ENCODE measurements at regions of chr5 and their contacts with region 1.

Region 1: DNA sequence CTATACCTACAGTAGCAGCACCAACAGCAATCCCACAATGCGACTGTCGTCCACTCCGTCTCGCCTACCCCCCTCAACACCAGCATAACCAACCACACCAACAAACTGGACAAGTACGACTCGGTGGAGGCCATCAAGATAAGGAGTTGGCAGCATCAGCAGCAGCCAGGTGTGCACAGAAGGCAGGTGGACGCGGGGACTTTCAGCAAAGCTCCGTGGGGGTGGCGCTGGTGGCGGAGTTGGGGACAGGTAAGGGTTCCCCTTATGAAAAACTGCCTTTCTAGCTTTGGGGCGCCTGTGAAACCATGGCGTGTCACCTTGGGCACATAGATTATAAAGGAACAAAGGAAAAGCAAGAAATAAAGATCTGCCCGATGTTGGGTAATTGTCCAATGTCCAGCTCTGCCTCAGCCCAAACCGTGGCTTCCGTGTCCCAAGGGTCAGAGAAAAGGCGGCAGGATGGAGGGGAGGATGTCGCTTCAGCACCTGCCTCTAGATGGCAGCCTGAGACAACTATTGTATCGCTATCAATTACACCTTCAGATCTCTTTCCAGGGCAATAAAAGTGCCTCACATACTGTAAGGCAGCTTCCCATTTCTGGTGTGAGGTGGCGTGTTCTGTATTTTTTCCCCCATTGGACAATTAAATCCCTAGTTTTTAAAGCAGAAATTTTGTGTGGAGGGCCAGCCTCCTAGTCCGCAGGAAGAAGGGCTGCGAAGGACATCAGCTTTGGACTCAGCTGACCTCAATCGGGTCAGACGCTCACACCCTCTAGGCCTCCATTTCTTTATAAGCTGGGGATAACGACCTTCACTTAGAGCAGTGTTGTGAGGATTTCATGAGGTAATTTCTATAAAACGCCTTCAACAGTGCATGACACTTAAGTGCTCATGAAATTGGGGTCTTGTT is 58.8 kb downstream of the MTRR start:
- DNase-seq: peak; percentile 68
- ATAC-seq: peak; percentile 78
- H3K4me3 Mint-ChIP-seq: no peak overlapping the region
- H3K27ac Mint-ChIP-seq: no peak overlapping the region
- H3K4me1 Mint-ChIP-seq: peaks cover 5% of the 10 kb centered on the region
- H3K27me3 Mint-ChIP-seq: peaks cover 17% of the 10 kb centered on the region

Region 2: DNA sequence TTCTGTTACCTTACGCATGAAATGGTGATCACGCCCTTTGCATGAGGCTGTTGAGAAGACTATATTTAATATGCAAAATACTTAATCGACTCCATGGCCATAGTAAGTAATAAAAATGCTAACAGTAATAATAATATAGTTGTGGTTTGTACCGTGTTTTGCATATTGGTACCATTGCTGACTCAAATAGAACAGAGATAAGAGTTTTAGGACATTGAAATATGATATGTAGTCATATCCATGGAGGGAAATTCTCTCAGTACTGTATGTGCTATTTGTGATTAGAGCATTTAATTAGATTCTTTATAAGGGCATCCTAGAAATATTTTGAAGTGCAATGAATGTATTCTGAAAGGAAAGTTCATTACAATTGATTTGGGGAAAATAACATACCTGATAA is 118.7 kb before region 1 on chr5:
- CTCF ChIA-PET with region 1: no interaction called
- POLR2A ChIA-PET with region 1: no interaction called
- intact Hi-C with region 1: no loop called
- DNase-seq: no peak
- ATAC-seq: no peak
- H3K4me3 Mint-ChIP-seq: no peak overlapping the region
- H3K27ac Mint-ChIP-seq: no peak overlapping the region
- H3K4me1 Mint-ChIP-seq: no peaks in the 10 kb centered on the region
- H3K27me3 Mint-ChIP-seq: peaks cover 20% of the 10 kb centered on the region

Region 3: DNA sequence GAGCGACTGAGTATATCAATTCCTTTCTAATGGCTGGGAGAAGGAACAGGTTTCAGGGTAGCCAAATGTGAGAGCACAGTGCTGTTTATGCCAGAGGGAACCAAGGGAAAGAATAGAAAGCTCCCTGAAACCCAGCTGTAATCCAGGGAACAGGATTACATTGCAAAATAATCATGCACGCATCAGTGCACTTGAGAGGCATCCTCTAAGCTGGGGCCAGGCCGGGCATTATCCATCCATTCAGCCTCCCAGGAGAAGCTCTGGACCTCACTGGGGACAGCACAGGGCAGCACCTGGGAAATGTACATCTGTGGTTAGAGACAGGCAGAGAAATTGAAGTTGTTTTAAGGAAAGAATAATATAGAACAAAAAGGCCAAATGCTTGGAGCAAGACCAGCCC is 14.0 kb after region 1 on chr5:
- CTCF ChIA-PET with region 1: interaction called, 10 read pairs
- POLR2A ChIA-PET with region 1: no interaction called
- intact Hi-C with region 1: no loop called
- DNase-seq: no peak
- ATAC-seq: no peak
- H3K4me3 Mint-ChIP-seq: no peak overlapping the region
- H3K27ac Mint-ChIP-seq: no peak overlapping the region
- H3K4me1 Mint-ChIP-seq: no peaks in the 10 kb centered on the region
- H3K27me3 Mint-ChIP-seq: peaks cover 16% of the 10 kb centered on the region

Region 4: GRCh38 chr5:8740595-8740994 is 812.9 kb after region 1 on chr5:
- CTCF ChIA-PET with region 1: no interaction called
- POLR2A ChIA-PET with region 1: no interaction called
- intact Hi-C with region 1: no loop called
- DNase-seq: no peak
- ATAC-seq: no peak
- H3K4me3 Mint-ChIP-seq: no peak overlapping the region
- H3K27ac Mint-ChIP-seq: no peak overlapping the region
- H3K4me1 Mint-ChIP-seq: no peaks in the 10 kb centered on the region
- H3K27me3 Mint-ChIP-seq: no peaks in the 10 kb centered on the region

Region 5: DNA sequence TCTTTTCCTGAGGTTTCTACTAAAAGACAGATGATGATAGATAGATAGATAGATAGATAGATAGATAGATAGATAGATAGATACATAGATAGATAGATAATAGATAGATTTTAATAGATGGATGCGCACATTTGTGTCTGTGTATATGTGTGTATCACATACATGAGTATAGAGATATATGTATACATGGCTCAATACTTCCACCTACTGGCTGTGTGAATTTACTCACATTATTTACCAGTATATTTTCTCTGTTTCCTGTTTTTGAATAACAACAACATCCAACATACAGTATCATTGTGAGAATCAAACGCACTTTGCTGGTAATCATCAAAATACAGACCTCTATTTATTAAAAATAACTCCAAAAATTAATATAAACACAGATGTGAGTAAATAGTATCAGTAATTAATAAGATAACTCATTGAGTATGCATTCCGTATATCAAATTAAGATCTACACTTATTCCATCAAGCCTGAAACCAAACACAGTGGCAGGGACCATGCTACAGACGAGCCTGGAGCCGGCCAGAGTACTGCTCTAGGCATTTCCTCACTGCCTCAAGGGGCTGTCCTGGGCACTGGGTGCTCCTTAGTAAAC is 1280.2 kb after region 1 on chr5:
- CTCF ChIA-PET with region 1: interaction called, 6 read pairs
- POLR2A ChIA-PET with region 1: no interaction called
- intact Hi-C with region 1: loop called (anchors 2 to 5 kb)
- DNase-seq: no peak
- ATAC-seq: no peak
- H3K4me3 Mint-ChIP-seq: no peak overlapping the region
- H3K27ac Mint-ChIP-seq: no peak overlapping the region
- H3K4me1 Mint-ChIP-seq: no peaks in the 10 kb centered on the region
- H3K27me3 Mint-ChIP-seq: no peaks in the 10 kb centered on the region

Region 6: DNA sequence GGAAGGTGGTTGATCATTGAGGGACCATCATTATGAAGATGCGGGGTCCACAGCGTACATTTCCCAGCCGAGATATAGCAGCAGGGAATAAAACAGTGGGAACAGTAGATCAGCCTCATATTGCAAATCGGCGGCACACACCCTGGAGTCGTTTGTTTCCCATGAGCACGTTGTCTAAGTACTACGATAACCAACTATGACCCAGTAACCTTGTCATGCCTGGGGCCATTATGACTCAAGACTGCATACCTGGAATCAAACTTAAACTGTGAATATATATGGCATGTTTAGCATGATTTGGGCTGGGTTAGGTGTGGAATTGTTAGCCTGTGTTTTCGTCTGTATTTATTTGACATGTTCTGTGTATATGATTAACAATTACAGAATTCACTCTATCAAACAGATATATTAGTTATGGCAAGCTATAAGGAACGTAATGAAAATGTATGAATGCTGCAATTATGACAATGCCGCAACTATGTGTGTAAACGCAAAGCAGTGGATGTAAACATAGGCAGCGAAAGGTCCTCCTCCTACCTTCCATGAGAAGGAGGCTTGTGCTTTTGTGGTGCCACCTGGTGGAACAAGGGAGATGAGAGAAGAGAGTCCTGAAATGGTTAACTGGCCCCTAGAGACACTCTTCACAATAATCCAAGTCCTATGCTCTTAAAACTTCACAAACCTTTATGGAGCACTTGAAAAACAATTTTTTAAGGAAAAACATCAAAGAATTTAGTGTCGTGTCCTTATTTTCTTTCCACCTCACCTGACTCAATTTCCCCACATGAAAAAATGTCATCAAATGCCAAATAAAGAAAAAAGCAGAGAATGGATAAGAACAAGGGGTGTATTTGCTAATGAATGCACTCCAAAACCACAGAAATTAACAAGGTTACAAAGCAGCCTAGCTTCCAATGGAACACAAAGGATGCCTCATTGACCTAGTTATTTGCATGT is 1571.1 kb after region 1 on chr5:
- CTCF ChIA-PET with region 1: no interaction called
- POLR2A ChIA-PET with region 1: no interaction called
- intact Hi-C with region 1: loop called in 1 of 2 experiments (anchors 5 kb)
- DNase-seq: peak; percentile 12
- ATAC-seq: no peak
- H3K4me3 Mint-ChIP-seq: no peak overlapping the region
- H3K27ac Mint-ChIP-seq: no peak overlapping the region
- H3K4me1 Mint-ChIP-seq: no peaks in the 10 kb centered on the region
- H3K27me3 Mint-ChIP-seq: no peaks in the 10 kb centered on the region

Region 7: DNA sequence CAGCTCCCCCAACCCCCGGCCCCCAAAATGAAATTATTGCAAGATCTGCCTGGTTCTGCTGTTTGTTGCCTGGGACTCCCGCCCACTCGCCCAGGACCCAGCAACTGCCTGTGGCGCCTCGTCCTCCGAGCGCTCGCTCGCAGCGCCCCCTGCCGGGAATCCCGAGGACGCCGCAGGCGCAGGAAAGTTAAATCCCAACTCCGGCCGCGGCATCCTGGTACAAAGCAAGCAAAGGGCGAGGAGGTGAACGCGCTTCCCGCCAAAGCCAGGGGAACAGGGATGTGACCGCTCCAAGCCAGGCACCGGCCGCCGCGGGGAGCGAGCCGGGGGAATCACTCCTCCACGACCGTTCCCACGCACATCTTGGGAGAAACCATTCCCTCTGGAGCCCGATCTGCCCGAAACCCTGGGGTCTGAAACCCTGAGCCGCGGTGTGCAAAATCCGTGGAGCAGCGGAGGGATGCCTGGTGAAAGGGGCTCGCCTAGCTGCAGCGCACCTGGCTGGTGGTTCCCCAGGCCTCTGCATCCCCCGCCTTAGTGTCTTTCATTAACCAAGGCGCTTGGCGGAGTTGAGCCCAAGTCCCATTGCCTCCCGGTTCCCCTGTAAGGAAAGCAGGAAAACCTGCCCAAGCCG is 1616.9 kb after region 1 on chr5:
- CTCF ChIA-PET with region 1: interaction called, 3 read pairs
- POLR2A ChIA-PET with region 1: no interaction called
- intact Hi-C with region 1: loop called in 1 of 2 experiments (anchors 5 kb)
- DNase-seq: peak; percentile 74
- ATAC-seq: peak; percentile 44
- H3K4me3 Mint-ChIP-seq: peak overlapping the region; percentile 41
- H3K27ac Mint-ChIP-seq: no peak overlapping the region
- H3K4me1 Mint-ChIP-seq: peaks cover 3% of the 10 kb centered on the region
- H3K27me3 Mint-ChIP-seq: peaks cover 20% of the 10 kb centered on the region

Measured in activated CD4-positive, alpha-beta T cell treated with anti-CD3 and anti-CD28 coated beads for 36 hours (primary cell).